PC-3 (cell line): ENCODE measurements at regions of chr22 and their contacts with region 1.

Region 1: GRCh38 chr22:21029572-21029971 is 2.8 kb downstream of the SLC7A4 start:
- DNase-seq: no peak
- ATAC-seq: no peak
- H3K4me3 ChIP-seq: no peak overlapping the region
- H3K27ac ChIP-seq: no peak overlapping the region
- H3K4me1 ChIP-seq: no peaks in the 10 kb centered on the region
- H3K27me3 ChIP-seq: no peaks in the 10 kb centered on the region
- CTCF ChIP-seq: no peak

Region 2: GRCh38 chr22:20555276-20555675 is 474.3 kb before region 1 on chr22:
- CTCF ChIA-PET with region 1: no interaction called
- POLR2A ChIA-PET with region 1: no interaction called
- intact Hi-C with region 1: no loop called
- DNase-seq: no peak
- ATAC-seq: no peak
- H3K4me3 ChIP-seq: no peak overlapping the region
- H3K27ac ChIP-seq: no peak overlapping the region
- H3K4me1 ChIP-seq: no peaks in the 10 kb centered on the region
- H3K27me3 ChIP-seq: no peaks in the 10 kb centered on the region
- CTCF ChIP-seq: no peak

Region 3: GRCh38 chr22:20885557-20886323 is 143.8 kb before region 1 on chr22:
- CTCF ChIA-PET with region 1: no interaction called
- POLR2A ChIA-PET with region 1: no interaction called
- intact Hi-C with region 1: no loop called
- DNase-seq: peak; percentile 78
- ATAC-seq: peak; percentile 96
- H3K4me3 ChIP-seq: no peak overlapping the region
- H3K27ac ChIP-seq: peak overlapping the region; percentile 31; the same call in 1 of the 2 replicates
- H3K4me1 ChIP-seq: peaks cover 13% of the 10 kb centered on the region
- H3K27me3 ChIP-seq: no peaks in the 10 kb centered on the region
- CTCF ChIP-seq: peak; percentile 91

Region 4: GRCh38 chr22:20968281-20968977 is 61.1 kb before region 1 on chr22:
- CTCF ChIA-PET with region 1: no interaction called
- POLR2A ChIA-PET with region 1: no interaction called
- intact Hi-C with region 1: no loop called
- DNase-seq: no peak
- ATAC-seq: no peak
- H3K4me3 ChIP-seq: no peak overlapping the region
- H3K27ac ChIP-seq: no peak overlapping the region
- H3K4me1 ChIP-seq: no peaks in the 10 kb centered on the region
- H3K27me3 ChIP-seq: no peaks in the 10 kb centered on the region
- CTCF ChIP-seq: no peak

Region 5: DNA sequence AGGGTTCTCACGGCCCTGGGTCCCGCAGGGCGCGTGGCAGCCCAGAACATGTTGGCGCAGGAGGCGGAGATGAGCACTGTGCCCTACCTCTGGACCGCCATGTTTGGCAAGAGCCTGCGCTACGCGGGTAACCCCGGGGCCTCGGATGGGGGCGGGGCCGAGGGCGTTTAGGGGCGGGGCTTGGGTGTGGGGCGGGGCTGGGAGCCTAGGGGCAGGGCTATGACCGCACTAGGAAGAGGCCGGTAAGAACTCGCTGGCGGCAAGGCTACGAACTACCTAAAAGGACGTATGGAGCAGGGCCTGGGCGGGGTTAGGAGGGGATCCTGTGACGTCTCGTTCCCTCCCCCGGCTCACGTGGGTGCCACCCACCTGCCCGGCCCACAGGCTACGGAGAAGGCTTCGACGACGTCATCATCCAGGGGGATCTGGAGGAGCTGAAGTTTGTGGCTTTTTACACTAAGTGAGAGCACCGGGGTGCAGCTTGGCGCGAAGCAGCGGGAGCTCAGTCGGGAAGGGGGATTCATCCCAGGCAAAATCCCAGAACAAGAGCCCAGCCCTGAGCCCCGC is 50.2 kb before region 1 on chr22:
- CTCF ChIA-PET with region 1: no interaction called
- POLR2A ChIA-PET with region 1: no interaction called
- intact Hi-C with region 1: no loop called
- DNase-seq: no peak
- ATAC-seq: no peak
- H3K4me3 ChIP-seq: no peak overlapping the region
- H3K27ac ChIP-seq: no peak overlapping the region
- H3K4me1 ChIP-seq: peaks cover 13% of the 10 kb centered on the region
- H3K27me3 ChIP-seq: no peaks in the 10 kb centered on the region
- CTCF ChIP-seq: no peak

Region 6: DNA sequence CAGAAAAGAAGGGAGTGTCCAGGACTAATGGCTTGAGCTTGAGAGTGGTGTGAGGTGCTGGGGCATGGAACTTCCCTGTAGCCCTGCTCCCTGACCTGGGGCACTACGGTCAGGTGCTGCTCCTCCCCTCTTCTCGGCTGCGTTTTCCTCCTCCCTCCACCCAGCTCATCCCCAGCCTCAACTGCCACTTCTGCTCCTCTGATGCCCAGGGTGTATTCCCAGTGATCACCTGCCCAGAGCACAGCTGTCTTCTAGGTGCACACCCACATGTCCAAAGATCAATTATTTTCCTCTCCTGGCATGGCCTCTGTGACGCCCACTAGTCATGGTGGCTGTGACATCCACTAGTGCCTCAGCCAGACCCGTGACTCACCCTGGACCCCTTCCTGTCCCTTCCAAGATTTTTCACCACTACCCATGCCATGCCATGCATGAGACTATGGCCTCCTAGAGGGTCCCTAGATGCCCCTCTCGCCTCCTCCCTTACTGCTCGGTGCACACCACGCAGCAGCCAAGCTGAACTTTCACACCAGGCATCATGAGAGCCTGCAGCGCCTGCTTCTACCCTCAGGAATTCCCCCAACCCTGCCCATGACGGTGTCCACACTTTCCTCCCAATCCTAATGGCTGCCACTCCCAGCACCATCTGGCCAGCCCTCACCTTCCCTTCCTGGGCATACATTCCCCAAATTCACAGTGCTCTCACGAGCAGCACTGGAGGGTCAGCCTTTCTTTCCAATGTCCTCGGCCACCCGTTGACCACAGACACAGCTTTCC is 12.7 kb before region 1 on chr22:
- CTCF ChIA-PET with region 1: interaction called, 11 read pairs
- POLR2A ChIA-PET with region 1: no interaction called
- intact Hi-C with region 1: no loop called
- DNase-seq: no peak
- ATAC-seq: no peak
- H3K4me3 ChIP-seq: no peak overlapping the region
- H3K27ac ChIP-seq: no peak overlapping the region
- H3K4me1 ChIP-seq: peaks cover 7% of the 10 kb centered on the region; the same call in 1 of the 2 replicates
- H3K27me3 ChIP-seq: no peaks in the 10 kb centered on the region
- CTCF ChIP-seq: no peak